ENCODE measurements at regions of chr12 and their contacts with region 1.

Region 1: DNA sequence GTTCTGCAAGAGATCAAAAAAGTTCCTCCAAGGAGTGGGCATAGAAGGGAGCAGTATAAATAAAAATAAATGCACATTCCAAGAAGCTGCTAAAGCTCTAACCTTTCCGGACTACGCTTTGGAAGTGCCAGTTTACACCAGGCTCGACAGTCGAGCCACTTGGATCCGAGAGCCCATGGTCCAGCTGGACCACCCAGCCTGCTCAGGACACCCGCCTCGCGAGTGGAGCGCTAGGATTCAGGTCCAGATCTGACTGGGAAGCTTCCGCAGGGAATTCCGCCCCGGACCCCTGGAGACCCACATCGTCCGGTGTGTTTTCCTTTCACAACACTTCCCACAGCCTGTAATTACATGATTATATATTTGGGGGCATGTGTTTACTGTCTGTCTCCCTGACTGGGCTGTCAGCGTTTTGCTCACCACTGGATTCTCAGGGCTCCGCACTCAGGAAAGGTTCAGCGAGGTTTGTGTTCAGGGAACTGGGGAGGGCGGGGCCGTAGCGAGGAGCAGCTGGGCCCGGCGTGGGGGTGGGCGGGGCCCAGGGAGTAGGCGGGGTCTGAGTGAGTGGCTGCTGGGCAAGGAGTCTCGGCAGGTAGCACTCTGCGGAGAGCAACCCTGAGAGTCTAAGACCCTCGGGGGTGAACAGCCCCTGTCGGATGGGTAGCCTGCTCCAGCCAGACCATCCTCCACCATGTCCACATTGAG is 52.3 kb upstream of the TMEM263 start:
- DNase-seq: peak; percentile 94
- H3K4me3 Mint-ChIP-seq: peak overlapping the region; percentile 63
- H3K27ac Mint-ChIP-seq: no peak overlapping the region
- H3K4me1 Mint-ChIP-seq: no peaks in the 10 kb centered on the region
- H3K27me3 Mint-ChIP-seq: peaks cover 44% of the 10 kb centered on the region
- CTCF ChIP-seq: no peak

Region 2: GRCh38 chr12:106386813-106387535 is 516.4 kb before region 1 on chr12:
- CTCF ChIA-PET with region 1: no interaction called
- intact Hi-C with region 1: loop called (anchors 5 kb)
- DNase-seq: no peak
- H3K4me3 Mint-ChIP-seq: no peak overlapping the region
- H3K27ac Mint-ChIP-seq: no peak overlapping the region
- H3K4me1 Mint-ChIP-seq: peaks cover 10% of the 10 kb centered on the region
- H3K27me3 Mint-ChIP-seq: no peaks in the 10 kb centered on the region
- CTCF ChIP-seq: no peak

Region 3: DNA sequence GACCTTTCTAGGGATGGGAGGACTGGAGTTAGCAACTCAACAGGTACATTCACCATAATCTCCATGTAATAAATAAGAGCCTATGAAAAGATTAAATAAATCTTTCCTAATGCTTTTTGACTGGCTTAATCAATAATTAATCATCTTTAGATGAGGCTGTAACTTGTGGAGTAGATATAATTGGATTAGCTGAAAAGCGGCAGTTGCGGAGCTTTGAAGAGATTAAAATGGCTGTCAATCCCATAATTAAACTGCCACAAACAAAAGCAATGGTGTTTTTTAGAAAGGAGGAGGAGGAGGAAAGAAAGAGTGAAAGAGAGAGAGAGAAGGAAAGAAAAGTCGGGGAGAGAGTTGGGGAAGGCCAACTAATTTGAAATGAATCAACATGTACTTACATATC is 18.4 kb before region 1 on chr12:
- CTCF ChIA-PET with region 1: no interaction called
- intact Hi-C with region 1: no loop called
- DNase-seq: no peak
- H3K4me3 Mint-ChIP-seq: no peak overlapping the region
- H3K27ac Mint-ChIP-seq: no peak overlapping the region
- H3K4me1 Mint-ChIP-seq: no peaks in the 10 kb centered on the region
- H3K27me3 Mint-ChIP-seq: no peaks in the 10 kb centered on the region
- CTCF ChIP-seq: no peak